ENCODE measurements at regions of chr11 and their contacts with region 1.

Region 1: DNA sequence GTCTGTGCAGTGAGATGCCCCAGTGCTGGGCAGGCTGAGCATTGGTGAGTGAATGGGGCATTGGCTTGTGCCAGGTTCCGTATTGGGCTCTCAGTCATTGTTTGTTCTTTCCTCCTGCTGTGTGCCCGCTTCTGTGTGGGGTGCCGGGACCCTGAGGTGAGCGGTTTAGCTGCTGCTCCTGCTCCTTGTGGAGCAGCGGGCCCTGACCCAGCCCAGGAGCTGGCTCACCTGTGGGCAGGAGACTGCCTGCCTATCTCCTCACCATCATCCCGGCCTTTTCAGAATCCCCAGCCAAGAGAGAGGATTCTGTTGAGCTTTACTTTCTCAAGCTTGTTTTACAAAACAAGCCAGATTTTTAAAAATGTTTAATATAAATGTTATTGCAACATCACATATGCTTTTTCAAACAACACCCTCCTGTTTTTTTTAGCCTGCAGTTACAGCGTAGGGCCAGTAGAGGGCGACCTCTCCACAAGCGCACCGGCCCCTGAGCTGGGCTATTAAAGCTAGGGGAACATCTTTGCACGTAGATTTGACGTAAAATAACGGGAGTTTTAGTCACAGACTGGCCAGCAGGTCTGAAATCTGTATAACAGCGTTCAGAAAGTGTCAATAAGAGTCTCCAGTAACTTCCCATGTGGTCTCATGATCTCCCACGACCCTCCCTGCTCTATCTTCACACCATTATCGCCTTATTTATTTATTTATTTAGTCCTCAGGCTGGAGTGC is 25.1 kb upstream of the RELT start:
- DNase-seq: peak; percentile 76
- H3K4me3 Mint-ChIP-seq: no peak overlapping the region
- H3K27ac Mint-ChIP-seq: no peak overlapping the region
- H3K4me1 Mint-ChIP-seq: no peaks in the 10 kb centered on the region
- H3K27me3 Mint-ChIP-seq: no peaks in the 10 kb centered on the region

Region 2: DNA sequence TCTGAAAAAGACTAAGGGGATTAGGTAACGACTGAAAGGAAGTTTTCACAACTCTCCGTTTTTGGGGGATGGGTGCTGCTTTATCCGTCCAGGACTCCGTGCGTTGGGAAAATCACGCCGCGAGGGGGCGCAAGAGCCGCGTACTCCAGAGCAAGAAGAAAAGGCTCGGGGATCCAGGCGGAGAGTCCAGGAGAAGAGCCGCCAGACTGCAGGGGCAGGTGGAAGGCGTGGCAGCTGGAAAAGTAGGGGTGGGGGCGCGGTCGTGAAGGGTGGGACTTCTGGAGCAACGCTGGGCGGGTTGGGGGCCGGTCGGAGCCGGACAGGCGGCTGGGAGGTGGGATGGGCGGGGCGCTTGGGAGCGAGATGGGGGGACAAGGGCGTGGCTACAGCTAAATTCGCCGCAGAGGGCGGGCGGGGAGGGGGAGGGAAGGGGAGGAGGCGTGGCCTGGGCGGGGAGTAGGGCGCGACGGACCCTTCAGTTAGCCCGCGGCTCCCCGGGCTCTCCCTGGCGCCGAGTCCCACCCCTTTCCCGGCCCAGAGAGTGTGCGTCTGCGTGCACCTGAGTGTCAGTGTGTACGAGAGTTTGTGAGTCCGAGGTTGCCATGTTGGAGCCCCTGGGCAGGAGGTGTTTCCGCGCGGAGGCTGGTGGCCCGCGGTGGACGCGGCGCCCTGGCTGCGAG is 43.6 kb before region 1 on chr11:
- CTCF ChIA-PET with region 1: interaction called, 13 read pairs
- POLR2A ChIA-PET with region 1: no interaction called
- intact Hi-C with region 1: no loop called
- DNase-seq: peak; percentile 93
- H3K4me3 Mint-ChIP-seq: peak overlapping the region; percentile 74
- H3K27ac Mint-ChIP-seq: no peak overlapping the region
- H3K4me1 Mint-ChIP-seq: peaks cover 6% of the 10 kb centered on the region
- H3K27me3 Mint-ChIP-seq: peaks cover 8% of the 10 kb centered on the region

Region 3: GRCh38 chr11:73366265-73366610 is 15.2 kb after region 1 on chr11:
- CTCF ChIA-PET with region 1: interaction called, 57 read pairs
- POLR2A ChIA-PET with region 1: no interaction called
- intact Hi-C with region 1: no loop called
- DNase-seq: peak; percentile 37
- H3K4me3 Mint-ChIP-seq: peak overlapping the region; percentile 13
- H3K27ac Mint-ChIP-seq: peak overlapping the region; percentile 34
- H3K4me1 Mint-ChIP-seq: peaks cover 22% of the 10 kb centered on the region
- H3K27me3 Mint-ChIP-seq: no peaks in the 10 kb centered on the region

Region 4: DNA sequence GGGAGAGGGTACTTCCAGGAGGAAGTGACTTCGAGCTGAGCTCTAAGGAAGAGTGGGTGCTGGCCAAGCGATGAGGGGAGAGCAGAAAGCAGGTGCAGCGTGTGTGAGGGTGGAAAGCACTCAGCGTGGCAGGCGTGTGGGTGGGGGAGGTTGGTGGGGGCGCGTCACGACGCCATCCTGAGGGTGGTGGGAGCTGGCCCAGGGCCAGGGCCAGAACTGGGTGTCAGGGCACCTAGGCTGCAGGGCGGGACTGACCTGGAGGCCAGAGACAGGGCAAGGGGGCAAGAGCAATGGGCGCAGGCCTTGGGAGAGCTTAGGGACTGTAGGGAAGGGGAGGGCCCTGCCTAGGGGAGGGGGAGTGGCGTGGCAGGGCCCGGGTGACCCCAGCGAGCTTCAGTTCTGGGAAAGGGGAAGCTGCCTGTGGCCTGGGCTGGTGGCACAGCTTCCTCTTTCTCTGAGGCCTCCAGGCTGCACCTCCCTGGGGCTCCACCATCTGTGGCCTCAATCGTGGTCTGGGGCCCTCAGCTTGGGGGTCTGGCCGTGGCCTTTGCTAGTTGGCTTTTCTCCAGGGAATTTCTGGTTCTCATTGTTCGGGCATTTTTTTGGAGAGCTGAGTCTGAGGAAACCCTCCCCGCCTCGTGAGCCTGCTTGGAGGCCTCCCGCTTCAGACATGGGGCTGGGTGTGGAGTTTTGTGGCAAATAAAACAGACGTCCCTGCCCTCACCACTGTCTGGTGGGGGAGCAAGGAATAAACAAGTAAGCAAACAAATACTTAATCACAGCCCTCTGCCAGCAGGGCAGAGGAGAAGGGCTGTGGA is 34.0 kb after region 1 on chr11:
- CTCF ChIA-PET with region 1: interaction called, 29 read pairs
- POLR2A ChIA-PET with region 1: interaction called, 4 read pairs
- intact Hi-C with region 1: no loop called
- DNase-seq: peak; percentile 27
- H3K4me3 Mint-ChIP-seq: no peak overlapping the region
- H3K27ac Mint-ChIP-seq: peak overlapping the region; percentile 18
- H3K4me1 Mint-ChIP-seq: peaks cover 56% of the 10 kb centered on the region
- H3K27me3 Mint-ChIP-seq: no peaks in the 10 kb centered on the region

Region 5: GRCh38 chr11:73404048-73404447 is 53.0 kb after region 1 on chr11:
- CTCF ChIA-PET with region 1: interaction called, 21 read pairs
- POLR2A ChIA-PET with region 1: no interaction called
- intact Hi-C with region 1: no loop called
- DNase-seq: peak; percentile 34
- H3K4me3 Mint-ChIP-seq: no peak overlapping the region
- H3K27ac Mint-ChIP-seq: no peak overlapping the region
- H3K4me1 Mint-ChIP-seq: no peaks in the 10 kb centered on the region
- H3K27me3 Mint-ChIP-seq: no peaks in the 10 kb centered on the region

Region 6: GRCh38 chr11:73478738-73479347 is 127.8 kb after region 1 on chr11:
- CTCF ChIA-PET with region 1: no interaction called
- POLR2A ChIA-PET with region 1: no interaction called
- intact Hi-C with region 1: no loop called
- DNase-seq: no peak
- H3K4me3 Mint-ChIP-seq: no peak overlapping the region
- H3K27ac Mint-ChIP-seq: no peak overlapping the region
- H3K4me1 Mint-ChIP-seq: no peaks in the 10 kb centered on the region
- H3K27me3 Mint-ChIP-seq: no peaks in the 10 kb centered on the region

Region 7: DNA sequence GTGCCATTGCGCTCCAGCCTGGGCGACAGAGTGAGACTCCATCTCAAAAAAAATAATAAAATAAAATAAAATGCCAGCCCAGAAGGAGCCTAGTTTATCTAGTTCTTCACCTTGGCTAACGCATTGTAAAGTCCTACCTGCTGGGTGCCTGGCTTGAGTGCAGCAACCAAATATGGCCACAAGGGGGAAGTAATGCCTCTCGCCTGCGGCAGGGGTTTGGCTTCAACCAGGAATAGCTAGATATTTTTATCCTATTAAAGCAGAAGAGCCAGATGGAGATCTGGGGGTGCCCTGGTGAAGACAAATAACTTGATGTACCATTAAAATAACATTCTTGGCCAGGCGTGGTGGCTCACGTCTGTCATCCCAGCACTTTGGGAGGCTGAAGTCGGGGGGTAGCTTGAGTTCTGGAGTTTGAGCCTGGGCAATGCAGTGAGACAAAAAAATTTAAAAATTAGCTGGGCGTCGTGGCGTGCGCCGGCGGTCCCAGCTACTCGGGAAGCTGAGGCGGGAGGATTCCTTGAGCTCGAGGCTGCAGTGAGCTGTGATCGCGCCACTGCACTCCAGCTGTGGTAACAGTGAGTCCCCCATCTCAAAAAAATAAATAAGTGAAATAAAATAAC is 274.7 kb after region 1 on chr11:
- CTCF ChIA-PET with region 1: interaction called, 12 read pairs
- POLR2A ChIA-PET with region 1: no interaction called
- intact Hi-C with region 1: no loop called
- DNase-seq: peak; percentile 75
- H3K4me3 Mint-ChIP-seq: no peak overlapping the region
- H3K27ac Mint-ChIP-seq: no peak overlapping the region
- H3K4me1 Mint-ChIP-seq: no peaks in the 10 kb centered on the region
- H3K27me3 Mint-ChIP-seq: peaks cover 14% of the 10 kb centered on the region

Measured in activated CD4-positive, alpha-beta memory T cell treated with anti-CD3 and anti-CD28 coated beads for 36 hours (primary cell).